Activated CD8-positive, alpha-beta memory T cell treated with anti-CD3 and anti-CD28 coated beads, Interleukin-2, amount 10 ng/mL, durations not matched to agents 7 days and 5 days (primary cell): ENCODE measurements at regions of chr22 and their contacts with region 1.

Region 1: DNA sequence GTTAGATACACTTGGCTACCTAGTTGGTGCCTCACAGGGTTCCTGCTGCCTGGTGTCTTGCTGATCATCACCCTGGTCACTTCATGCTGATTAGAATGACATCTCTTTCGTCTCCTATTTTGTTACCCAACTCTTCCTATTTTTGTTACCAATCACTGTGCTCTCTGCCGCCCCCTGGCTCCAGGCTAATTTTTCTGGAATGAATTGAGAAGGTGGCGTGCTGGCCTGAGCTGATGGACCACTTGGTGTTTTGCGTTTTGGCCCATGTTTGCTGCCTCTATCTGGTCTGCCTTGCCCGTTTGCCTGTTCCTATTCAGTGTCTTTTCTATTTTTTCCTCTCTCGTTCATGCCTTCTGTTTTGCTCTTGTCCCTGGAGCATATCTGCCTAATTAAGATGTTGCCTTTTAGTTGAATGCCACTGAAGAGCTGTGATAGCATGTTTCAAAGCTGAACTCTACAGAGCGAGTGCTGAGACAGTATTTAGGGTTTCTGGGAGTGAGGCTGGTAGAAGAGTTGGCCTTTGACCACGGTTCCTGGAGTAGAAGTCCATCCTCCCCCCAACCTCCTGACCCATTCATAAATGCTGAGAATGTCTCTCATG is 5.9 kb upstream of the ATF4 start:
- DNase-seq: peak; percentile 68
- ATAC-seq: no peak
- H3K4me3 Mint-ChIP-seq: no peak overlapping the region
- H3K27ac Mint-ChIP-seq: no peak overlapping the region
- H3K4me1 Mint-ChIP-seq: peaks cover 34% of the 10 kb centered on the region
- H3K27me3 Mint-ChIP-seq: no peaks in the 10 kb centered on the region

Region 2: GRCh38 chr22:39448205-39449054 is 66.0 kb before region 1 on chr22:
- CTCF ChIA-PET with region 1: no interaction called
- DNase-seq: no peak
- ATAC-seq: no peak
- H3K4me3 Mint-ChIP-seq: peak overlapping the region; percentile 5
- H3K27ac Mint-ChIP-seq: peak overlapping the region; percentile 58
- H3K4me1 Mint-ChIP-seq: peaks cover 42% of the 10 kb centered on the region
- H3K27me3 Mint-ChIP-seq: no peaks in the 10 kb centered on the region

Region 3: GRCh38 chr22:39462443-39463221 is 51.8 kb before region 1 on chr22:
- CTCF ChIA-PET with region 1: no interaction called
- DNase-seq: no peak
- ATAC-seq: no peak
- H3K4me3 Mint-ChIP-seq: no peak overlapping the region
- H3K27ac Mint-ChIP-seq: no peak overlapping the region
- H3K4me1 Mint-ChIP-seq: peaks cover 12% of the 10 kb centered on the region
- H3K27me3 Mint-ChIP-seq: peaks cover 26% of the 10 kb centered on the region

Region 4: GRCh38 chr22:39502109-39502788 is 12.2 kb before region 1 on chr22 and contains the start of gene MIEF1:
- CTCF ChIA-PET with region 1: interaction called, 134 read pairs
- DNase-seq: peak; percentile 97
- ATAC-seq: peak; percentile 98
- H3K4me3 Mint-ChIP-seq: peak within 1 kb of the TSS; percentile 88
- H3K27ac Mint-ChIP-seq: peak within 1 kb of the TSS; percentile 94
- H3K4me1 Mint-ChIP-seq: peaks cover 31% of the 10 kb centered on the region
- H3K27me3 Mint-ChIP-seq: peaks cover 4% of the 10 kb centered on the region
- total RNA-seq, gene MIEF1: 40.6 to 45.7 TPM

Region 5: GRCh38 chr22:39703928-39704639 is 189.6 kb after region 1 on chr22:
- CTCF ChIA-PET with region 1: no interaction called
- DNase-seq: no peak
- ATAC-seq: no peak
- H3K4me3 Mint-ChIP-seq: no peak overlapping the region
- H3K27ac Mint-ChIP-seq: no peak overlapping the region
- H3K4me1 Mint-ChIP-seq: no peaks in the 10 kb centered on the region
- H3K27me3 Mint-ChIP-seq: peaks cover 4% of the 10 kb centered on the region